Endothelial cell of umbilical vein (primary cell): ENCODE measurements at regions of chr7 and their contacts with region 1.

Region 1: DNA sequence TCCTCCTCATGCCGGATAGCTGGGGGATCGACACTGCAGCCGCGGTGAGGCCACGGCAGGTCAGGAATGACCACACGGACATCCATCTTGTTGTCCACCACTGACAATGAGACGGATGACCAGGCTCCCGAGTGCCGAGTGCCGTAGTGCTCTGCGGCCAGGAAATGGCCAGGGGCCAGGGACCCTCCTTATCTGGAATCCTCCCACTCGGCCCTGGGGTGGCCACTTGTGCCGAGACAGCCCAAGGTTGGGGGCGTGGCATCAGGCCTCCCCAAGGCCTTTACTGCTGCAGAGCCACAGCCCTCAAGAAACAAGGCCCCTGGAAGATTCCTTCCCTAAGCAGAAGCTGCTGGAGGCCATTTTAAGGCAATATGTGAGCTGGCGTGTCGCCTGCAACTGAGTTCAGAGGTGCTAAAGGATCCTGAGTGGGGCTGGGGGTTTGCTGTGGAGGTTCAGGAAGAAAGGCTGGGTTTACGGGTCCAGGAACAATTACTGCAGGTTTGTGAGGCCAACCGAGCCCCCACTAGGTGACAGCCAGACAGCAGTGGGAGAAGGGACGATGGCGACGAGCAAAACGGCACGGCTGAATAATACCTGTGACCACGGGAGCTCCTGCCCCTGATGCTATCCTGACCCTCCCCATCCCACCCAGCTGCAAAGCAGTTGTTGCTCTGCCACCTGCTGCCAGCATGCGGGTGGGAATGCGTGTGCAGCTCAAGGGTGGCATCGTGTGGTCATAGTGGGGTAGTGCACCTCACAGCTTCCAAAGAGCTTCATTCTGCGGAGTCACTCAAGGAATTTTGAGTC is 31.6 kb upstream of the LEP start:
- DNase-seq: peak; percentile 77
- H3K4me3 ChIP-seq: no peak overlapping the region
- H3K27ac ChIP-seq: no peak overlapping the region
- H3K4me1 ChIP-seq: no peaks in the 10 kb centered on the region
- H3K27me3 ChIP-seq: peaks cover 10 to 24% of the 10 kb centered on the region in 2 experiments
- CTCF ChIP-seq: peak; percentile 93 to 97
- POLR2A ChIP-seq: no peak

Region 2: DNA sequence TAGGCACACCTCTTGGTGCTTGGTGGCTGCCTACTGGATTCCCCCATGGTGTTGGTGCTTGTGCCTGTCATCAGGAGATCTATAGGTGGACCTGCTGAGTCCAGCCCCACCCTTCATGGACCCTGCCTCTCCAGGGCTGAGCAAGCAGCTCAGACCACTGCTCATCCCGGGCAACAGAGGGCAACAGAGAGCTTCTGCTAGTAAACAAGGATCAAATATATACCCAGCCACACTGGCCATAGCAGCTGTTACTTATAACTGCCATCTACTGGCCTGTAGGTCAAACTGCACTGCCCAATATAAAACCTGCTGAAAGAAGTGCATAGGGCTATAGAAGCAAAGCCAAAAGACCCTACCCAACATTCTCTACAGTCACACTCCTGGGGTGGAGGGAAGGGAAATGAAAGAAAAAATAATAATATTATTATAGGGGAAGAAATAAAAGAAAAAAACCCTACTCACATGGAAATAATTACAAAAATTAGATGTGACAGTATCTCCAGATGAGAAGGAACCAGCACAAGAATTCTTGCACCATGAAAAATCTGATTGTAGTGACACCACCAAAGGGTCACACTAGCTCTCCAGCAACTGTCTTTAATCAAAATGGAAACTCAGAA is 762.0 kb before region 1 on chr7:
- CTCF ChIA-PET with region 1: interaction called, 16 read pairs
- POLR2A ChIA-PET with region 1: no interaction called
- dilution Hi-C with region 1: no loop called
- intact Hi-C with region 1: no loop called
- DNase-seq: peak; percentile 32
- H3K4me3 ChIP-seq: no peak overlapping the region
- H3K27ac ChIP-seq: no peak overlapping the region
- H3K4me1 ChIP-seq: no peaks in the 10 kb centered on the region
- H3K27me3 ChIP-seq: no peaks in the 10 kb centered on the region
- CTCF ChIP-seq: peak; percentile 47 to 60
- POLR2A ChIP-seq: no peak

Region 3: DNA sequence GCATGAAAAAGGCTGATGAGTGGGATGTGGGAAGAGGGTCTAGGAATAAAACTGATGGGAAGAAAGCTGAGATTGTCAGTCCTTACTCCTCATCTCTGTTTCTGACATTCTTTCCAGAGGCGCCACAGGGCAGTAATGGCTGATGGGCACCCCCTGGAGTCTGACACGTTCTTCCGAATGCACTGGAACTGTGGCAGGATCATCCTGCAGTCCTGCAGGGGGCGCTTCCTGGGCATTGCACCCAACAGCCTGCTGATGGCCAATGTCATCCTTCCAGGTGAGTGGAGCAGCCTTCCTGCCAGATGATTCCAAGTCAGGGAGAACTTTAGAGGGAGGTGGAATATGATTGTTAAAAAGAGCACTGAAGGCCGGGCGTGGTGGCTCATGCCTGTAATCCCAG is 611.1 kb before region 1 on chr7:
- CTCF ChIA-PET with region 1: interaction called, 13 read pairs
- POLR2A ChIA-PET with region 1: no interaction called
- dilution Hi-C with region 1: no loop called
- intact Hi-C with region 1: no loop called
- DNase-seq: no peak
- H3K4me3 ChIP-seq: no peak overlapping the region
- H3K27ac ChIP-seq: no peak overlapping the region
- H3K4me1 ChIP-seq: no peaks in the 10 kb centered on the region
- H3K27me3 ChIP-seq: peaks cover 0 to 13% of the 10 kb centered on the region in 2 experiments
- CTCF ChIP-seq: peak; percentile 25 to 27
- POLR2A ChIP-seq: no peak

Region 4: GRCh38 chr7:127717502-127718339 is 491.7 kb before region 1 on chr7:
- CTCF ChIA-PET with region 1: interaction called, 22 read pairs
- POLR2A ChIA-PET with region 1: interaction called, 7 read pairs
- dilution Hi-C with region 1: loop called (anchors 25 kb)
- intact Hi-C with region 1: no loop called
- DNase-seq: no peak
- H3K4me3 ChIP-seq: no peak overlapping the region
- H3K27ac ChIP-seq: no peak overlapping the region
- H3K4me1 ChIP-seq: peaks cover 3% of the 10 kb centered on the region
- H3K27me3 ChIP-seq: no peaks in the 10 kb centered on the region
- CTCF ChIP-seq: no peak
- POLR2A ChIP-seq: no peak

Region 5: GRCh38 chr7:128104035-128104742 is 105.2 kb before region 1 on chr7:
- CTCF ChIA-PET with region 1: interaction called, 22 read pairs
- POLR2A ChIA-PET with region 1: no interaction called
- dilution Hi-C with region 1: no loop called
- intact Hi-C with region 1: loop called (anchors 10 kb)
- DNase-seq: no peak
- H3K4me3 ChIP-seq: peak overlapping the region in 1 of 3 experiments; percentile 18
- H3K27ac ChIP-seq: no peak overlapping the region
- H3K4me1 ChIP-seq: peaks cover 6% of the 10 kb centered on the region
- H3K27me3 ChIP-seq: peaks cover 10 to 25% of the 10 kb centered on the region in 2 experiments
- CTCF ChIP-seq: no peak
- POLR2A ChIP-seq: no peak

Region 6: GRCh38 chr7:128221929-128222403 is 12.5 kb after region 1 on chr7:
- CTCF ChIA-PET with region 1: interaction called, 34 read pairs
- POLR2A ChIA-PET with region 1: no interaction called
- dilution Hi-C with region 1: no loop called
- intact Hi-C with region 1: no loop called
- DNase-seq: no peak
- H3K4me3 ChIP-seq: no peak overlapping the region
- H3K27ac ChIP-seq: no peak overlapping the region
- H3K4me1 ChIP-seq: no peaks in the 10 kb centered on the region
- H3K27me3 ChIP-seq: peaks cover 18 to 29% of the 10 kb centered on the region in 2 experiments
- CTCF ChIP-seq: no peak
- POLR2A ChIP-seq: no peak